ENCODE measurements at regions of chr11 and their contacts with region 1.

Region 1: GRCh38 chr11:12281571-12282478 is 95.5 kb upstream of the PARVA start:
- DNase-seq: peak; percentile 57 to 81 (median 65)
- ATAC-seq: peak; percentile 79
- H3K4me3 ChIP-seq: no peak overlapping the region
- H3K4me3 Mint-ChIP-seq: no peak overlapping the region
- H3K27ac ChIP-seq: no peak overlapping the region
- H3K27ac Mint-ChIP-seq: no peak overlapping the region
- H3K4me1 ChIP-seq: no peaks in the 10 kb centered on the region
- H3K4me1 Mint-ChIP-seq: peaks cover 0 to 3% (median 0%) of the 10 kb centered on the region in 7 donors
- H3K27me3 ChIP-seq: no peaks in the 10 kb centered on the region
- H3K27me3 Mint-ChIP-seq: no peaks in the 10 kb centered on the region

Region 2: GRCh38 chr11:11028017-11028692 is 1253.7 kb before region 1 on chr11:
- CTCF ChIA-PET with region 1: no interaction called
- POLR2A ChIA-PET with region 1: no interaction called
- intact Hi-C with region 1: no loop called
- DNase-seq: peak; percentile 59 to 82 (median 72)
- ATAC-seq: peak; percentile 97
- H3K4me3 ChIP-seq: no peak overlapping the region
- H3K4me3 Mint-ChIP-seq: no peak overlapping the region
- H3K27ac ChIP-seq: no peak overlapping the region
- H3K27ac Mint-ChIP-seq: peak overlapping the region in 5 of 9 donors; percentile 2 to 26 (median 12)
- H3K4me1 ChIP-seq: no peaks in the 10 kb centered on the region
- H3K4me1 Mint-ChIP-seq: peaks cover 0 to 6% (median 0%) of the 10 kb centered on the region in 7 donors
- H3K27me3 ChIP-seq: no peaks in the 10 kb centered on the region
- H3K27me3 Mint-ChIP-seq: peaks cover 0 to 32% (median 0%) of the 10 kb centered on the region in 5 donors

Region 3: DNA sequence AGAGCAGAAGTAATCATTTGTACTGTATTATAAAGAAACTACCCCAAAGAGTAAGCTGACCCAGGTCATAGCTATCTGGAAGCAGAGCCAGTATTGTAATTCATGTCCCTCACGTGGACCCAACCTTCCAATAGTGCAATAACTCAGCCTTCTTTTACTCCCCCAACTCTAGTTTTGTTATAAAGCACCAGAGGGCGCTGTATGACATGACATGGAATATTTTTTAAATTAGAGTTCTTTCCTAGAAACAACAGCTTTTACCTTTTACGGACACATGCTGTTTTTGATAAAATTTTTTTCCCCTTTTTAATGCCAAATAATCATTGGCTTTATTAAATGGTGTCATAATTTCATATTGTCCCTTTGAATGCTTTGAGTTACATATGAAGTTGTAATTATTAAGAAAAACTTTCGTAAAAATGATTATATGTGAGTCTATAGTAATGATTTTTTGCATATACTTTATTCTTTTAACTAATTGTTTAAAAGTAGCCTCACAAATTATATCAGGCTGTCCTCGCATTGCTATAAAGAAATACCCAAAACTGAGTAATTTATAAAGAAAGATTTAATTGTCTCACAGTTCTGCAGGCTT is 350.3 kb before region 1 on chr11:
- CTCF ChIA-PET with region 1: no interaction called
- POLR2A ChIA-PET with region 1: no interaction called
- intact Hi-C with region 1: loop called (anchors 1 to 5 kb)
- DNase-seq: peak in 7 of 9 donors; percentile 7 to 45 (median 31)
- ATAC-seq: peak; percentile 75
- H3K4me3 ChIP-seq: no peak overlapping the region
- H3K4me3 Mint-ChIP-seq: no peak overlapping the region
- H3K27ac ChIP-seq: no peak overlapping the region
- H3K27ac Mint-ChIP-seq: no peak overlapping the region
- H3K4me1 ChIP-seq: no peaks in the 10 kb centered on the region
- H3K4me1 Mint-ChIP-seq: peaks cover 4 to 11% (median 8%) of the 10 kb centered on the region in 7 donors
- H3K27me3 ChIP-seq: no peaks in the 10 kb centered on the region
- H3K27me3 Mint-ChIP-seq: no peaks in the 10 kb centered on the region

Region 4: GRCh38 chr11:12043959-12044819 is 237.6 kb before region 1 on chr11:
- CTCF ChIA-PET with region 1: interaction called, 259 read pairs
- POLR2A ChIA-PET with region 1: interaction called, 7 read pairs
- intact Hi-C with region 1: loop called (anchors 1 kb)
- DNase-seq: peak; percentile 17 to 64 (median 44)
- ATAC-seq: peak; percentile 74
- H3K4me3 ChIP-seq: no peak overlapping the region
- H3K4me3 Mint-ChIP-seq: no peak overlapping the region
- H3K27ac ChIP-seq: no peak overlapping the region
- H3K27ac Mint-ChIP-seq: peak overlapping the region in 1 of 9 donors; percentile 58
- H3K4me1 ChIP-seq: peaks cover 0 to 3% of the 10 kb centered on the region in 2 donors
- H3K4me1 Mint-ChIP-seq: peaks cover 0 to 9% (median 0%) of the 10 kb centered on the region in 7 donors
- H3K27me3 ChIP-seq: no peaks in the 10 kb centered on the region
- H3K27me3 Mint-ChIP-seq: peaks cover 0 to 7% (median 0%) of the 10 kb centered on the region in 5 donors

Region 5: DNA sequence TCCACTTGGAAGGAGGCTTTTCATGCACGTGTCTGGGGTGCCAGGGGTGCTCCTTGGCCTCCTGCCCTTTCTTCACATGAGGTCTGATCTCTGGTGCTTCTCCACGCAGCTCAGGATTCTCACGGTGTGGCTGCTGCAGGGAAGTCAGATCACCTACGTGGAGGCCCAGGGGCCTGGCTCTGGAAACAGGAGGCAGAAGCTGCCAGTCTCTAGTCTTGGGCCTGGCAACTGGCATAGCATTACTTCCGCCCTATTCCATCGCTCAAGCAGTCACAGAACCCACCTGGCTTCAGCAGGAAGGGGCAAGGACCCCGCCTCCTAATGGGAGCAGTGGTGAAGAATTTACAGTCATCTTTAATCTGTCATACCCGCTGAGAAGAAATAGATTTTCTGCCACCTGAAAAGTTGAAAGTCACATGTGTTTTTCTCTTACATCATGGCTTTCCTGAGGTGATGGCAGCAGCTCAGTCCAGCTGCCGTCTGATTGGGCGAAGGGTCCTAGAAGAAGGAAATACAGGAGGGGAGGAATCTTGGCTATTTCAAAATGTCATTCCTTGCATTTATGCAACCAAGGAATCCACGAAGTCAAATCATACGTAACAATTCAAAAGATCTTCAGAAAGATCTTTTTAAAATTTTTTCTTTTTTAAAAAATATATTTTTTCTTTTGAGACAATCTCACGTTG is 223.3 kb before region 1 on chr11:
- CTCF ChIA-PET with region 1: interaction called, 259 read pairs
- POLR2A ChIA-PET with region 1: no interaction called
- intact Hi-C with region 1: no loop called
- DNase-seq: no peak
- ATAC-seq: no peak
- H3K4me3 ChIP-seq: no peak overlapping the region
- H3K4me3 Mint-ChIP-seq: no peak overlapping the region
- H3K27ac ChIP-seq: no peak overlapping the region
- H3K27ac Mint-ChIP-seq: no peak overlapping the region
- H3K4me1 ChIP-seq: no peaks in the 10 kb centered on the region
- H3K4me1 Mint-ChIP-seq: peaks cover 0 to 6% (median 0%) of the 10 kb centered on the region in 7 donors
- H3K27me3 ChIP-seq: no peaks in the 10 kb centered on the region
- H3K27me3 Mint-ChIP-seq: no peaks in the 10 kb centered on the region

Region 6: GRCh38 chr11:12653725-12654124 is 371.9 kb after region 1 on chr11:
- CTCF ChIA-PET with region 1: no interaction called
- POLR2A ChIA-PET with region 1: no interaction called
- intact Hi-C with region 1: no loop called
- DNase-seq: no peak
- ATAC-seq: no peak
- H3K4me3 ChIP-seq: no peak overlapping the region
- H3K4me3 Mint-ChIP-seq: no peak overlapping the region
- H3K27ac ChIP-seq: no peak overlapping the region
- H3K27ac Mint-ChIP-seq: no peak overlapping the region
- H3K4me1 ChIP-seq: no peaks in the 10 kb centered on the region
- H3K4me1 Mint-ChIP-seq: peaks cover 0 to 2% (median 0%) of the 10 kb centered on the region in 7 donors
- H3K27me3 ChIP-seq: no peaks in the 10 kb centered on the region
- H3K27me3 Mint-ChIP-seq: peaks cover 4 to 18% (median 12%) of the 10 kb centered on the region in 5 donors